ENCODE measurements at regions of chr1 and their contacts with region 1.

Region 1: DNA sequence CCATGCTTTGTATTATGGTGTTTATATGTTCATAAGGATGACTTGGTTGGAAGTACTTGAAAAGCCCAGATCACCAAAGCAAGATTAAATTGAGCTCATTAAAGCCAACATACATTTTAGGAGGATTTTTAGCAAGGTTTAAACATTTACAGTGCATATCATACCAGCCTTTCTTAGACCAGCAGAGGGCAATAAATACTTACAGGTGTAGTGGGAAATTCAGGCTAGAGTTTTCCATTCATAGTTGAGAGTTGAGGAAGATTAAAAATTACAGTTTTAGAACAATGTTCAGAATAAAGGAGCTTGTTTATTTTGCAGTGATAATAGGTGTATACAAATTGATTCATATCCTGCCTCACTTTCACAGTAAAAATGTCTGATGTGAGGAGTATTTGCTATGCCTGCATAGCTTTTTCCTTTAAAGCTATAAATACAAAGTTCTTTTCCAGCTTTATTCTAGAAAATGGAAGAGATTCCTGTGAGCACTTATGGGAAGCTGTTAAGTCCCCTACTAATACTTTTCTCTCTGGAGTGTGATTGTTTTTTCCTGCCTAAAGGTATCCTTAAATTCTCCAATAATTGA is 35.3 kb downstream of the DTL start:
- DNase-seq: no peak
- ATAC-seq: no peak
- H3K4me3 ChIP-seq: no peak overlapping the region
- H3K27ac ChIP-seq: no peak overlapping the region
- H3K4me1 ChIP-seq: no peaks in the 10 kb centered on the region
- H3K27me3 ChIP-seq: no peaks in the 10 kb centered on the region

Region 2: GRCh38 chr1:212007886-212008285 is 62.9 kb before region 1 on chr1:
- intact Hi-C with region 1: no loop called
- DNase-seq: no peak
- ATAC-seq: no peak
- H3K4me3 ChIP-seq: no peak overlapping the region
- H3K27ac ChIP-seq: no peak overlapping the region
- H3K4me1 ChIP-seq: no peaks in the 10 kb centered on the region
- H3K27me3 ChIP-seq: no peaks in the 10 kb centered on the region

Region 3: DNA sequence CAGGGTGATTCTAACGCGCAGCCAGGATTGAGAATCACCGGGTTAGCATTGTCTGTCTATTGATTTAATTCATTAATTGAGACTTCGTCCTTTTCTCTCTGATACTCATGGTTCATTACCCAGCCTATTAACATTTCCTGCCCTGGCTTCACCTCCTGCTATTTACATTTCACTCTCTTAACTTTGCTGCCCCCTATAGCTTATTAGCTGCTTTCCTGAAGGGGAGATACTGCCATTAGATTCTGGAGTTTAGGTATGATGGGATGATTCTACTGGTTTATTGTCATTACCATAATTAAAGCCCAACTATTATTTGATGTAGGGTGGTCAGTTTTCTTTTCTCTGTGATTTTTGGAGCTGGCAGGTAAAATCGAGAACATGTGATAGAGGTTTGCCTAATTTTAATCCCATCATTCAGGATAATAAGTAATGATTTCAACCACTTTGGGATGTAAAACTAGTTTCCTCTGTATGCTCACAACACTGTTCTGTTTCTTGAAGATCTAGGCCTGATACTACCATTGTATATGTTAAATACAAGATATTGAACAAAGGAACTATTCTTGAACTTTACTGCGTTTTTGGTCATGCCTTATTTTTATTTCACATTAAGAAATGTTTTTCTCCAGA is 220.8 kb after region 1 on chr1:
- intact Hi-C with region 1: loop called (anchors 5 kb)
- DNase-seq: no peak
- ATAC-seq: no peak
- H3K4me3 ChIP-seq: no peak overlapping the region
- H3K27ac ChIP-seq: no peak overlapping the region
- H3K4me1 ChIP-seq: peaks cover 2 to 15% of the 10 kb centered on the region in 2 donors
- H3K27me3 ChIP-seq: no peaks in the 10 kb centered on the region

Region 4: GRCh38 chr1:212368073-212368484 is 297.3 kb after region 1 on chr1:
- intact Hi-C with region 1: loop called (anchors 2 kb)
- DNase-seq: no peak
- ATAC-seq: peak; percentile 89
- H3K4me3 ChIP-seq: no peak overlapping the region
- H3K27ac ChIP-seq: no peak overlapping the region
- H3K4me1 ChIP-seq: no peaks in the 10 kb centered on the region
- H3K27me3 ChIP-seq: no peaks in the 10 kb centered on the region